ENCODE measurements at regions of chr20 and their contacts with region 1.

Region 1: DNA sequence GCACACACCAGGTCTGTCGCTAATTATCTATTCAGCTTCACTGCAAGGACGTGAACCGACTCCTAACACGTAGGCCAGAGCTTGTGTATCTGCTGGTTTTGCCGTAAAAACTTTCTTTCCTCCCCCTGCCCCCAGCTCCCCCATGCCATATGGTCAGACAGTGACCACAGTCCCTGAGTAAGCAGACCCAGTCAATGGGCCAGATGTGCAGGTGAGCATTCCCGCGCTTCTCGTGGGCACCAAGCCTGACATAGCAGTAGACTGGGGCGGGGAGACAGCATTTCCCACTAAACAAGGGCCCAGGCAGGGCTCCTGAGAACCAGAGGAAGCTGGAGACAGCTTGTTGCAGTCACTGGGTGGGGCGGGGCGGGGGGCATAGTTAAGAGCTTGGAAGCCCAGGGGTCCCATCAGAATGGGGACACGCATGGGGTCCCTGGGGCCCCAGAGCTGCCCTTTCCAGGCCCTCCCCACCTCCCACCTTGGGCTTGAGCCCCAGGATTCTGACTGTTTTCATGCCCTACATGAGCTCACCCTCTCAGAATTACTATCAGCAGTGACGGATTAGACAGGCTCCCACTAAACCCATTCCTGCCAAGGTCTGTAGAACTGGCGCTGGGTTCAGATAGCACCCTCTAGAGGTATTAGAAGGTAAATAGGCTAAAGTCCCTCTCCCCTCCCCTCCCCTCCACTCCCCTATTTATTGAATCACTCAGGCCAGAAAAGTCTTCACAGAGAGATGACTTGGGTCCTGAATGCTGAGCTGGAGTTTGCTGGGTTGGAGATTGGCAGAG is 51.8 kb downstream of the CDH26 start:
- DNase-seq: no peak
- H3K4me3 ChIP-seq: no peak overlapping the region
- H3K27ac ChIP-seq: no peak overlapping the region
- H3K4me1 ChIP-seq: no peaks in the 10 kb centered on the region; a peak in 1 of 7 replicates
- H3K27me3 ChIP-seq: no peaks in the 10 kb centered on the region; a peak in 1 of 7 replicates
- CTCF ChIP-seq: peak; percentile 15 to 67 (median 63)
- EP300 ChIP-seq: no peak
- POLR2A ChIP-seq: no peak
- RAD21 ChIP-seq: peak; percentile 38 to 62; a peak in 3 of 4 replicates

Region 2: GRCh38 chr20:59782986-59783640 is 226.9 kb before region 1 on chr20:
- CTCF ChIA-PET with region 1: no interaction called
- POLR2A ChIA-PET with region 1: no interaction called
- DNase-seq: peak; percentile 43 to 89
- H3K4me3 ChIP-seq: no peak overlapping the region
- H3K27ac ChIP-seq: no peak overlapping the region
- H3K4me1 ChIP-seq: no peaks in the 10 kb centered on the region
- H3K27me3 ChIP-seq: no peaks in the 10 kb centered on the region
- CTCF ChIP-seq: peak; percentile 79 to 88 (median 85)
- EP300 ChIP-seq: no peak
- POLR2A ChIP-seq: no peak
- RAD21 ChIP-seq: peak; percentile 73

Region 3: DNA sequence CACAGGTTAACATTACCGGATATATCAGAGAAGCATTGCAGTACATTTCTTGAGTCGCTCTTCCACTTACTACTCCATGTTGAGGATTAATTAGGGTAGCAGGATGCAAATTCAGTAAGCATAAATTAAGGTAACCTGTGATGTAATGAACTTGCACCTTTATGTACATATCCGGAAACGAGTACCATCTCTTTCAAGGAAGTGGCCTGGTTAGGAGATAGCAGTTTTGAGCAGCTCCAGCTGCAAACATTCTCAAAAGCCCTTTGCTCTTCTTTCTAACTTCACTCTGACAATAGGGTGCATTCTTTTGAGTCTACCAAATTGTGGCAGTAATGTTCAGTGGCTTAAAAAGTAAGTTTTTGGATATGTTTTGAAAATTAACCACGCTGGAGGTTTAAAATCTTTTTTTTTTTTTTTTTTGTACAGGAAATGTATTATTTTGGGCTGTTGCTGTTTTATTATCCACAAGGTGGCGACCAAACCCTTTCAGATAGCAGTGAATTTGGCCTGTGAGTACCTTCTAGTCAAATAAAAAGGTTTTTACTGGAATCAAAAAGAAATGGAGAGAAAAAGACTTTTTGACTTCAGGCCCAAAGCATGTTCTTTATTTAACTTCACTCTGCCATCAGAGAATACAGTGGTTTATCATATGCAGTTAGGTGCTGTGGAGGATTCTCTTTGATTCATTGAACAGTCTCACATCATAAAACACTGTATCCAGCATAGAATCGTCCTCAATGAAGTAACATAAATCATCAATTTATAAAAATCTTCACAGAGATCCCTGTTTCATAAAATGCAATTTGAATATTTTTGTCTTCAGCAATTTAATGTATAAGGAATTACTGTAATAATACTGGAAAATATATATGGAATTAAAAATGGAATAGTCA is 60.9 kb before region 1 on chr20:
- CTCF ChIA-PET with region 1: interaction called, 19 read pairs
- POLR2A ChIA-PET with region 1: no interaction called
- DNase-seq: no peak
- H3K4me3 ChIP-seq: no peak overlapping the region
- H3K27ac ChIP-seq: no peak overlapping the region
- H3K4me1 ChIP-seq: peaks cover 0 to 2% (median 0%) of the 10 kb centered on the region in 4 experiments; a peak in 1 of 7 replicates
- H3K27me3 ChIP-seq: no peaks in the 10 kb centered on the region
- CTCF ChIP-seq: peak in 2 of 3 experiments; percentile 35 to 42; a peak in 2 of 4 replicates
- EP300 ChIP-seq: no peak
- POLR2A ChIP-seq: no peak
- RAD21 ChIP-seq: peak; percentile 68 to 71

Region 4: DNA sequence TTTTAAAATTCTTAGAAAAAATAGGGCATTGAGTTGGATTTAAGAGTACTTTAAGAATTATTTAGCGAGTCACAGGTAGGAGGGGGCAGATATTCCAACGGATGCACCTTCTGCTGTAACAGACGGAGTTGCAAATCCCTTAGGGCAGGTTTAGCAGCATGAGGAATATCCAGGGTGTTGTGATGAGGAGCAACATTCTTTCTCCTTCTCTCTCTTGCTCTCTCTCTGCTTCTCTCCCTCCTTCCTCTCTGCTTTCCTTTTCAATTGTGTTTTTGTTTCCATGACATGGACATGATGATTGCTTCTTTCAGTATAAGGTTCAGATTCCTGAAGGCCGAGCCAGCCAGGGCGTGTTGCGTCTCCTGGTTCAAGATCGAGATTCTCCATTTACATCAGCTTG is 22.9 kb before region 1 on chr20:
- CTCF ChIA-PET with region 1: interaction called, 10 read pairs
- POLR2A ChIA-PET with region 1: no interaction called
- DNase-seq: no peak
- H3K4me3 ChIP-seq: no peak overlapping the region
- H3K27ac ChIP-seq: no peak overlapping the region
- H3K4me1 ChIP-seq: peaks cover 0 to 6% (median 3%) of the 10 kb centered on the region in 4 experiments; a peak in 3 of 7 replicates
- H3K27me3 ChIP-seq: no peaks in the 10 kb centered on the region
- CTCF ChIP-seq: no peak
- EP300 ChIP-seq: no peak
- POLR2A ChIP-seq: no peak
- RAD21 ChIP-seq: no peak

Region 5: DNA sequence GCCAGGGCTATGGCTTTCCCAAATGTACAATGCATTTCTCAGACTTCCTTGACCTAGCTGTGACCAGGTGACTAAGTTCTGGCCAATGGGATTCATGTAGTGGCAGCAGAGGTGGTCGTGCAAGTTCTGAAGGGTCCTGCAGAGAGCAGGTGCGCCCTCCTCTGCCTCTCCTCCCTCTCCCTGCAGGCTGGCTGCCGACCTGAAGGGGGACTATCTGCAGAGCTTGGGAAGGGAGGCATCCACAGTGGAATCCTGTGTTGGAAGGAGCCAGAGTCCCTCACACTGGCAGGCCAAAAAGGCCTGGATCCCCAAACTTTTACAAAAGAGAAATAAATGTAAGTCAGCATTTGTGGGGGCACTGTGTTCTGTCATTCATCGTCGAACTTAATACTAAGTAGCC is 14.8 kb after region 1 on chr20:
- CTCF ChIA-PET with region 1: interaction called, 17 read pairs
- POLR2A ChIA-PET with region 1: no interaction called
- DNase-seq: no peak
- H3K4me3 ChIP-seq: no peak overlapping the region
- H3K27ac ChIP-seq: no peak overlapping the region
- H3K4me1 ChIP-seq: 0 out of 7 replicates have a peak, but pooled peaks cover 0 to 2% (median 0%) of the 10 kb centered on the region in 4 experiments
- H3K27me3 ChIP-seq: peaks cover 0 to 4% (median 0%) of the 10 kb centered on the region in 4 experiments; a peak in 1 of 7 replicates
- CTCF ChIP-seq: peak; percentile 49 to 61 (median 56); a peak in 3 of 4 replicates
- EP300 ChIP-seq: no peak
- POLR2A ChIP-seq: no peak
- RAD21 ChIP-seq: peak; percentile 14 to 21; a peak in 1 of 4 replicates

Region 6: DNA sequence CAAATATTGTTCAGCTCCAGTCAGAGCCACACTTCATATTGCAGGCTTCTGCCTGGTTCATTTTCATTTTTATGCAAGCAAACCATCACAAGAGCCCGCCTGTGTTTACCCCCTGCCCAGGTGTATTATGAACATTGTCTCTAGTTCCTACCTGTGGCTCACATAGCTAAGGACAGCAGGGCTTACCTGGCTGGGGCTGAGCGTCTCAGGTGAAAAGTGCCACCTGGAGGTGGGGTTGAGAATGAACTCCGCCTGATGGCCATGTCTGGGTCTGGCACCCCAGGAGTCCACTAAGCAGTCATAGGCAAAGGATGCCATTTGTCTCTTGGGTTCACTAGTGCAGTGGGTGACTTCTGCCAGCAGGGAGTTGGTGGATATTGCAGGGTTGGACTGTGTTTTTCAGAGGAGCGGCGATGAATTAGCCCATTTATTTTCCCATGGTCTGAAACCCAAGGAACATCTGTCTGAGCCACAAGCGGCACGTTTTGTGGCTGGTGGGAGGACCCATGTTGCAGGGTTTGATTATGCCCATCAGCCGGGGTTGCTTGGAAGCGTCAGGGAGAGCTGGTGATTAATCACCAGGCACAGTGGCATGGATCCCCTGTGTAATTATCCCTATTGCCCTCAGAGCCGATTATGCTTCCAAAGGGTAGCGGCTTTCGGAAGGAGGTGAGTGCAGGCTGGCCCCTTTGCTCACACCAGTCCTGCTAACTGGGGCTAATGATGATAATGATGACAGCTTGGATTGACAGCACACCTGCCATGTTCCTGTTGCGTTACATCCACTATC is 40.3 kb after region 1 on chr20:
- CTCF ChIA-PET with region 1: interaction called, 12 read pairs
- POLR2A ChIA-PET with region 1: no interaction called
- DNase-seq: peak; percentile 38 to 68
- H3K4me3 ChIP-seq: no peak overlapping the region
- H3K27ac ChIP-seq: no peak overlapping the region
- H3K4me1 ChIP-seq: no peaks in the 10 kb centered on the region
- H3K27me3 ChIP-seq: no peaks in the 10 kb centered on the region; a peak in 1 of 7 replicates
- CTCF ChIP-seq: peak; percentile 74 to 92 (median 79)
- EP300 ChIP-seq: no peak
- POLR2A ChIP-seq: no peak
- RAD21 ChIP-seq: peak; percentile 63 to 80